HEK293 (cell line): ENCODE measurements at regions of chr14 and their contacts with region 1.

Region 1: DNA sequence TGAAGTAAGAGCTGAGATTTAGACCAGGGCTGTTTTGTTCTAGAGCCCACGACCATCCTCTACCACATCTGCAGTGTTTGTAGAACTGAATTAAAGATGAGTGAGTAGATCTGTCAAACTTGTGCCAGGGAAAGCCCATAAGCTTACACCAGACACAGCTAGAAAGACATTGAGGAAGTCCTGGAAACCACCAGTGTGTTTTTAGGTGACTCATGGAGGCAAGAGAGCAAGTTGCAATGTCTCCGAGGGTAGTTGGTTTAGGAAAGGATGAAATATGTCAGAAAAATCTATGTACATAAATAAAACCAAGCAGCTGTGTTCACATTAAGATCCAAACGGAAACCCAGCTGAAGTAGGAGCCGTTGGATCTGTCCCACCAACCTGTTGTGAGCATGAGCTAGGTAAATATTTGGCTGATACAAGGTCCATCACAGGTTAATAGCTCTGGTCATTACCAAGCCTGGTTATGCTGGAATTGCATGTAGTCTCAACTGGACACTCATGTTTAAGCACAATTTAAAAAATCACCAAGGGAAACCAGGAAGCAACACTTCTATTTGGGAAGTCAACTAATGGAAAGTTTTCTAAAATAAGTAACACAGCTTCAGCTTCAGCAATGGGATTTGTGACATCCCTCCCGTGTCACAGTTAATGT is 49.9 kb upstream of the PLEKHG3 start:
- H3K4me3 ChIP-seq: no peak overlapping the region
- H3K27ac ChIP-seq: no peak overlapping the region
- H3K4me1 ChIP-seq: no peaks in the 10 kb centered on the region
- CTCF ChIP-seq: no peak

Region 2: GRCh38 chr14:64556526-64556925 is 97.8 kb before region 1 on chr14:
- CTCF ChIA-PET with region 1: no interaction called
- POLR2A ChIA-PET with region 1: interaction called, 10 read pairs
- H3K4me3 ChIP-seq: no peak overlapping the region
- H3K27ac ChIP-seq: no peak overlapping the region
- H3K4me1 ChIP-seq: no peaks in the 10 kb centered on the region; the same call in 1 of the 2 replicates
- CTCF ChIP-seq: no peak

Region 3: DNA sequence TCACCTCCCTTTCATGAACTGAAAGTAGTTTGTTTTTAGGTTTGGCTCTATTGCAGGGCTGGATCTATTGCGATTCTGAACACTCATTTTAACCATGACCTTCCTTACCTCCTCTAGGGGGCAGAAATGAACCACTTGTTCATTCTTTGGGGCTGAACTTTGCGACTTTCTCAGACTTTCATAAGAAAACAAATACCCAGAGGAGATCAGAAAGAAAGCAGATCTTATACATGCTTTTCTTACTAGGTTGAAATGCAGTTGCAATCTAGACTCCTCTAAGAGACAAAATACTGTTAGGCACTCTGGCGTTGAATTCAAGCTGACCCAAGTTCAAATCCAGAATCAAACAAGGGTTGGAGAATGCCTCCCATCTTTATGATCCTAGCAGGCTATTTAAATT is 17.2 kb after region 1 on chr14:
- CTCF ChIA-PET with region 1: interaction called, 15 read pairs
- POLR2A ChIA-PET with region 1: no interaction called
- H3K4me3 ChIP-seq: no peak overlapping the region
- H3K27ac ChIP-seq: no peak overlapping the region
- H3K4me1 ChIP-seq: 0 out of 2 replicates have a peak, but pooled peaks cover 3% of the 10 kb centered on the region
- CTCF ChIP-seq: 0 out of 2 replicates have a peak, but pooled peaks have one; percentile 9

Region 4: GRCh38 chr14:65006261-65006721 is 351.9 kb after region 1 on chr14:
- CTCF ChIA-PET with region 1: no interaction called
- POLR2A ChIA-PET with region 1: no interaction called
- H3K4me3 ChIP-seq: no peak overlapping the region
- H3K27ac ChIP-seq: no peak overlapping the region
- H3K4me1 ChIP-seq: peaks cover 13% of the 10 kb centered on the region
- CTCF ChIP-seq: no peak